ENCODE measurements at regions of chr3 and their contacts with region 1.

Region 1: DNA sequence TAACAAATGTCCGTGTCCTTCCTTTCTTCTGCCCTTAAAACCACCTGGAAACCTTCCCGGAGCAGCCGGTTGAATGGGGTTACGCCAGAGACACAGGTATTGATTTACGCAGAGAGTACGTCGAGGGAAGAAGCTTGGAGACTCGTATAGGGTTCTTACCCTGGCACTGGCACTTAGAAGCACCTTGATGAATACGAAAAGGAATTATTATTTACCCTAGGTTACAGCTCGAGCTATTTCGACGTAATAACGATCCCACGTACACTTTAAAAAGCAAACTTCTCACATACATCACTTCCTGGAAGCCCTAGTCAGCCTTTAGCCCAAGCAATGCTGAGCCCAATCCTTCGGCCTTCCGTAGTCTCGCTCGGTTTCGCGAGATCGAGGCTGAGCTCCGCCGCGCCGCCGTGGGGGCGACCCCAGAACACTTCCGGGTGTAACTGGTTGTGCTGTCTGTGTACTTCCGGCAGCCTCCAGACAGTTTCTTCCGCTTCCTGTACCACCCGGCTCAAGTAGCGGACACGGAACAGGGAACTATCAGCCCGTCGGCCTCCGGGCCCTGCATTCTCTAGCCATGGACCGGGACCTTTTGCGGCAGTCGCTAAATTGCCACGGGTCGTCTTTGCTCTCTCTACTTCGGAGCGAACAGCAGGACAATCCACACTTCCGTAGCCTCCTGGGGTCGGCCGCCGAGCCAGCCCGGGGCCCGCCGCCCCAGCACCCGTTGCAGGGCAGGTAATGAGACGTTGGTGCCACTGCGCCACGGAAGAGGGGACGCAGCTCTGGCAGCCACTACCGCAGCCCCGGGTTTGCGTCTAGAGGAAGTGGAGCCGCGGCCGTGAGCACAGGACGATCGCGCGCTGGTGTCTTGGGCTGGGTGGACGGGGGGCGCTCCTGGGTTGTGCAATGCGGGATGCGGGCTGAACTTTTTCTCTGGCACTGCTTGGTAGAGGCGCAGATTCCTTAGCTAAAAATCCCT is at the start of gene TTC14:
- DNase-seq: peak; percentile 92 to 94 (median 93)
- H3K4me3 ChIP-seq: peak within 1 kb of the TSS; percentile 67 to 89
- H3K4me3 Mint-ChIP-seq: peak within 1 kb of the TSS; percentile 90 to 98 (median 96)
- H3K27ac ChIP-seq: peak within 1 kb of the TSS; percentile 89
- H3K27ac Mint-ChIP-seq: peak within 1 kb of the TSS; percentile 95 to 99 (median 97)
- H3K4me1 ChIP-seq: peaks cover 30% of the 10 kb centered on the region
- H3K4me1 Mint-ChIP-seq: peaks cover 19 to 42% (median 26%) of the 10 kb centered on the region in 4 donors
- H3K27me3 ChIP-seq: no peaks in the 10 kb centered on the region
- H3K27me3 Mint-ChIP-seq: peaks cover 5 to 6% of the 10 kb centered on the region in 2 donors
- total RNA-seq, gene TTC14: 168 to 177 TPM

Region 2: DNA sequence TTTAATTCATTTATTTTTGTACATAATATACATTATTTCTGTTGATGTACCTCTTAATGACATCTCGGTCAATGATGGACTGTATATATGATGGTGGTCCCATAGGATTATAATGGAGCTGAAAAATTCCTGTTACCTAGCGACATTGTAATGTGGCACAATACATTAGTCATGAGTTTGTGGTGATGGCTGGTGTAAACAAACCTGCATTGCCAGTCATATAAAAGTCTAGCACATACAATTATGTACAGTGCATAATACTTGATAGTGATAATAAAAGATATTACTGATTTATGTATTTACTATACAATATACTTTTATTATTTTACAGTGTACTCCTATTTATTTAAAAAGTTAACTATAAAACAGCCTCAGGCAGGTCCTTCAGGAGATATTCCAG is 15.1 kb after region 1 on chr3:
- CTCF ChIA-PET with region 1: interaction called, 5 read pairs
- POLR2A ChIA-PET with region 1: interaction called, 20 read pairs
- intact Hi-C with region 1: no loop called
- DNase-seq: no peak
- H3K4me3 ChIP-seq: no peak overlapping the region
- H3K4me3 Mint-ChIP-seq: no peak overlapping the region
- H3K27ac ChIP-seq: no peak overlapping the region
- H3K27ac Mint-ChIP-seq: no peak overlapping the region
- H3K4me1 ChIP-seq: no peaks in the 10 kb centered on the region
- H3K4me1 Mint-ChIP-seq: peaks cover 0 to 5% (median 4%) of the 10 kb centered on the region in 4 donors
- H3K27me3 ChIP-seq: no peaks in the 10 kb centered on the region
- H3K27me3 Mint-ChIP-seq: no peaks in the 10 kb centered on the region

Region 3: DNA sequence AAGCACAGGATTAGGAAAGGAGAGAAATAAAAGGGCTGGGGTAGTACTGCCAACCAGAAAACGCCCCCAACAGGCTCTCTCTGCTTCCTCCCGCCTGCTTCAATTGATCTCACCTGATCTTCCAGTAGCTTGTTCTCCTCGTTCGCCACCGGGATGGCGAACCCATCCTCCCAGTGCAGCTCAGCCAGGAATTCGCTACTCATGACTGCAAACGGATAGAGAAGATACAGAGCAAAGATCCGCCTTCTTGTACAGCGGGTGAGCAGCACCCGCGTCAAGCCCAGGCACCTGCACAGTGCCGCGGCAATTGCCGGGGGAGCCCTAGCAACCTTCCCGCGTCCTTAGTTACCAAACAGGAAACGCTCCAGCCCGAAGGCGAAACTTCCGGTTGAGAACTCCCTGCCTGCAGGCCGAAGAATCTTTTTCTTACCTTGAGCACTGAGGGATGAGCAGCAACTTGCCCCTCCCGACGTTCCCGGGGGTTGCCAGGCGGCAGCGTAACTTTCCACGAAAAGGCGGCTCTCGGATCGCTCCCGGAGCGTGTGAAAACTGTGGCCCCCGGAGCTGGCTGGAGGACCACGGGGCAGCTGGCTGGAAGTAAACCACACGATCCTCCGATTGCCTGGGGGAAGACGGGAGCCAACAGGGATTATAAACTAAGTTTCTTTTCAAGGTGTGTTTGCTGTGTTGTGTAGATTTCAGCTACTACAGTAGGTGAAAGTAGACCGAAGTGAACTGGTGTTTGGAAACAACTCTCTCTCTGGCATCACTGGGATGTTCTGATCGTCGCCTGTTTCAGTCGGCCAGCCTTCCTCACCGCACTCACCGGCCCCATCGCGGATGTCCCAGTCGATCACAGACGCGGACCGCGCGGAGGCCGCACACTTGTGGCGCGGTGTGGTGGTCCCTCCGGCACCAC is 77.5 kb after region 1 on chr3 and contains the start of gene CCDC39:
- CTCF ChIA-PET with region 1: interaction called, 6 read pairs
- POLR2A ChIA-PET with region 1: interaction called, 4 read pairs
- intact Hi-C with region 1: loop called (anchors 1 kb)
- DNase-seq: peak; percentile 41 to 51 (median 43)
- H3K4me3 ChIP-seq: peak within 1 kb of the TSS; percentile 37 to 68
- H3K4me3 Mint-ChIP-seq: peak within 1 kb of the TSS; percentile 85 to 96 (median 90)
- H3K27ac ChIP-seq: no peak within 1 kb of the TSS
- H3K27ac Mint-ChIP-seq: peak within 1 kb of the TSS; percentile 42 to 88 (median 72)
- H3K4me1 ChIP-seq: peaks cover 22% of the 10 kb centered on the region
- H3K4me1 Mint-ChIP-seq: peaks cover 12 to 25% (median 18%) of the 10 kb centered on the region in 4 donors
- H3K27me3 ChIP-seq: peaks cover 10% of the 10 kb centered on the region
- H3K27me3 Mint-ChIP-seq: peaks cover 21 to 37% of the 10 kb centered on the region in 2 donors
- total RNA-seq, gene CCDC39: 0.29 TPM in 1 of 2 experiments, not detected in the other

Region 4: GRCh38 chr3:180912304-180913296 is 310.6 kb after region 1 on chr3 and contains the start of gene FXR1:
- CTCF ChIA-PET with region 1: interaction called, 12 read pairs
- POLR2A ChIA-PET with region 1: interaction called, 35 read pairs
- intact Hi-C with region 1: loop called (anchors 1 kb)
- DNase-seq: peak; percentile 89 to 91 (median 90)
- H3K4me3 ChIP-seq: peak within 1 kb of the TSS; percentile 77 to 98
- H3K4me3 Mint-ChIP-seq: peak within 1 kb of the TSS; percentile 91 to 97 (median 96)
- H3K27ac ChIP-seq: peak within 1 kb of the TSS; percentile 98
- H3K27ac Mint-ChIP-seq: peak within 1 kb of the TSS; percentile 95 to 99 (median 98)
- H3K4me1 ChIP-seq: peaks cover 51% of the 10 kb centered on the region
- H3K4me1 Mint-ChIP-seq: peaks cover 38 to 69% (median 55%) of the 10 kb centered on the region in 4 donors
- H3K27me3 ChIP-seq: no peaks in the 10 kb centered on the region
- H3K27me3 Mint-ChIP-seq: no peaks in the 10 kb centered on the region
- total RNA-seq, gene FXR1: 131 TPM